Activated naive CD8-positive, alpha-beta T cell treated with anti-CD3 and anti-CD28 coated beads, Interleukin-2, amount 10 ng/mL, durations not matched to agents 7 days and 5 days (primary cell): ENCODE measurements at regions of chr15 and their contacts with region 1.

Region 1: DNA sequence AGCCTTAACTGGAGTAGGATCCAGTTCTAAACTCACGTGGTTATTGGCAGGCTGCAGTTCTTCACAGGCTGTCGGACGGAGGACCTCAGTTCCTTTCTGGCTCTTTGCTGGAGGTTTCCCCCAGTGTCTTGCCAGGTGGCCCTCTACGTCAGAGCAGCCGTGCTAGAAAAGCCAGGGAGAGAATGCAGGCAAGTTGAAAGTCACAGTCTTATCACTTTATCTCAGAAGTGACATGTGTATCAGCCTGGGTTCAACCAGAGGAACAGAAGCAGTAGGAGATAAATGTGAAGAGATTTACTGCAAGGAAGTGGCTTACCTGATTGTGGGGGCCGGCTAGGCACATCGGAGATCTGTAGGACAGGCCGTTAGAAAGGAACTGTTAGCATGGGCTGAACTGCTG is 125.3 kb upstream of the BNIP2 start:
- DNase-seq: peak; percentile 45
- ATAC-seq: peak; percentile 81
- H3K4me3 Mint-ChIP-seq: peak overlapping the region; percentile 22
- H3K27ac Mint-ChIP-seq: peak overlapping the region; percentile 77
- H3K4me1 Mint-ChIP-seq: peaks cover 18% of the 10 kb centered on the region
- H3K27me3 Mint-ChIP-seq: peaks cover 5% of the 10 kb centered on the region

Region 2: DNA sequence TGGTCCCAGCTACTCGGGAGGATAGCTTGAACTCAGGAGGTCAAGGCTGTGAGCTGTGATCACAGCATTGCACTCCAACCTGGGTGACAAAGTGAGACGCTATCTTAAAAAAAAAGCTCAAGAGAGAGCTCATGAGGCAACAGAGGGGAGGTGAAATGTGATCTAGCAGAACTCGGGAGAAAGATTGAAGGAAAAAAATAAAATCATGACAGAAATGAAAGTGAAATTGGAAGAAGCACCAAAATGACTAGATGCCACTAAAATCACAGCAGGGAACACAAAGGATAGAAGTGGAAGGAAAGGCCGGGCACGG is 15.8 kb before region 1 on chr15:
- POLR2A ChIA-PET with region 1: interaction called, 12 read pairs
- DNase-seq: no peak
- ATAC-seq: no peak
- H3K4me3 Mint-ChIP-seq: peak overlapping the region; percentile 83
- H3K27ac Mint-ChIP-seq: peak overlapping the region; percentile 85
- H3K4me1 Mint-ChIP-seq: peaks cover 55% of the 10 kb centered on the region
- H3K27me3 Mint-ChIP-seq: peaks cover 4% of the 10 kb centered on the region

Region 3: DNA sequence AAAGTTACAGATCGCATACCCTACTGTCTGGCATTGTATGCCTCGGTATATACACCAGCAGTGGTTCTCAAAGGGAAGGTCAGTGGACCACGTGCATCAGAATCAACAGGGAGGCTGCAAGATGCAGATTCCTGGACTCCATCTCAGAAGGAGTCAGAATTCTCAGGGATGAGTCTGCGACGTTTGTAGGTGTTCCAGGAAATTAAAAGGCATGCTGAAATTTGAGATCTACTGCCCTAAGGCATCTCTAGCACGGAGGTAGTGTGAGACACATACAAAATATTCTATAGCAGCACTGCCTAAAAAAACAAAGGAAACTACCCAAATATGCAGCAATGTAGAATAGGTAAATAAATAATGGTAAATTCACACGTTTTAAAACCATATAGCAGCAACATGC is 11.5 kb after region 1 on chr15:
- POLR2A ChIA-PET with region 1: no interaction called
- DNase-seq: no peak
- ATAC-seq: no peak
- H3K4me3 Mint-ChIP-seq: no peak overlapping the region
- H3K27ac Mint-ChIP-seq: no peak overlapping the region
- H3K4me1 Mint-ChIP-seq: no peaks in the 10 kb centered on the region
- H3K27me3 Mint-ChIP-seq: peaks cover 5% of the 10 kb centered on the region

Region 4: GRCh38 chr15:59867086-59867855 is 52.9 kb after region 1 on chr15:
- POLR2A ChIA-PET with region 1: no interaction called
- DNase-seq: no peak
- ATAC-seq: no peak
- H3K4me3 Mint-ChIP-seq: no peak overlapping the region
- H3K27ac Mint-ChIP-seq: no peak overlapping the region
- H3K4me1 Mint-ChIP-seq: no peaks in the 10 kb centered on the region
- H3K27me3 Mint-ChIP-seq: peaks cover 24% of the 10 kb centered on the region